ENCODE measurements at regions of chr10 and their contacts with region 1.

Region 1: DNA sequence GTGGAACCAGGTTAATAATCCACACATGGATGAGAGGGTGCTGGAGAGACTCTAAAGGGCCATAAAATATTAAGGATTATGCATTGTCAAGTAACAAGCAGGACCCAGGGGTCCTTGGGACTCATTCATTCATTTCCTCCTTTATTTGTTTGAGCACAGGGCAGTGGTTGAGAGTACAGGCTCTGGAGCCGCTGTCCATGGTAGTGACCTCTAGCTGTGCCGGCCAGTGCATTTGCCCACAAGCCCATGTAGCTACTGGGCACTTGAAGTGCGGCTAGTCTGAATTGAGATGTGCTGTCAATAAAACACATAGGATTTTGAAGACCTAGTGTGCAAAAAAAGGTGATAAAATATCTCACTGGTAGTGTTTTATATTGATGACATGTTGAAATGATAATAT is 137.6 kb downstream of the C10orf105 start:
- DNase-seq: peak in 4 of 10 donors; percentile 36 to 64 (median 51)
- H3K4me3 ChIP-seq: no peak overlapping the region
- H3K27ac ChIP-seq: peak overlapping the region in 55 of 59 donors; percentile 12 to 98 (median 88)
- H3K27me3 ChIP-seq: no peaks in the 10 kb centered on the region
- CTCF ChIP-seq: peak in 6 of 56 donors; percentile 8 to 36 (median 10)

Region 2: GRCh38 chr10:71597821-71598498 is 15.9 kb after region 1 on chr10:
- intact Hi-C with region 1: loop called in 1 of 2 experiments (anchors 2 kb)
- DNase-seq: peak in 9 of 10 donors; percentile 15 to 82 (median 67)
- H3K4me3 ChIP-seq: peak overlapping the region in 14 of 59 donors; percentile 2 to 38 (median 16)
- H3K27ac ChIP-seq: peak overlapping the region; percentile 45 to 97 (median 86)
- H3K27me3 ChIP-seq: no peaks in the 10 kb centered on the region
- CTCF ChIP-seq: peak in 4 of 56 donors; percentile 3 to 10 (median 8)

Measured in dorsolateral prefrontal cortex (tissue), 120 donors.